ENCODE measurements at regions of chr2 and their contacts with region 1.

Region 1: GRCh38 chr2:234500394-234501006 is 3.6 kb upstream of the ARL4C start:
- DNase-seq: peak; percentile 59 to 75
- ATAC-seq: peak; percentile 73

Region 2: DNA sequence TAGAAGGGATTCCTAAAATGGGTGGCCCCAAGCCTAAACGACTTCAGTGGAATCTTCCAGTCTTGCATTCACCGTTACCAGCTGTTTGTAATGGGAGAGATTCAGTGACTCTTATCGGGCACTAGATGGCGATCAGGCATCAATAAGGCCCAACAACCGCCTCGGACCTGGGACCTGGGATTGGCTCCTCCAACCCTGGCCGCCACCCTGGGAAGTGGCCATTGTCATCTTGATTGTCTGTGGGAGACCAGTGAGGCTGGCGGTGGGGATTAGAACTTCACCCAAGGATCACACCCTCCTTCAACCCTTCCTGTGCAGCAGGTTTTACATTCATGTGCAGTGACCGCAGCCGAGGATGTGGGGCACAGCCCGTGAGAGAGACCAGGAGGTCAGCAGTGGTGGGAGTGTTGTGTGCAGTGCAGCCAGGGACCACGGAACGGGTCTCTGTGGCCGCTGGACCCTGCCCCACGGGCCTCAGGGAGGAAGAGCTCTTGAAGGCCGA is 364.7 kb before region 1 on chr2:
- intact Hi-C with region 1: loop called (anchors 2 to 10 kb)
- DNase-seq: peak; percentile 33 to 63
- ATAC-seq: peak; percentile 97

Region 3: DNA sequence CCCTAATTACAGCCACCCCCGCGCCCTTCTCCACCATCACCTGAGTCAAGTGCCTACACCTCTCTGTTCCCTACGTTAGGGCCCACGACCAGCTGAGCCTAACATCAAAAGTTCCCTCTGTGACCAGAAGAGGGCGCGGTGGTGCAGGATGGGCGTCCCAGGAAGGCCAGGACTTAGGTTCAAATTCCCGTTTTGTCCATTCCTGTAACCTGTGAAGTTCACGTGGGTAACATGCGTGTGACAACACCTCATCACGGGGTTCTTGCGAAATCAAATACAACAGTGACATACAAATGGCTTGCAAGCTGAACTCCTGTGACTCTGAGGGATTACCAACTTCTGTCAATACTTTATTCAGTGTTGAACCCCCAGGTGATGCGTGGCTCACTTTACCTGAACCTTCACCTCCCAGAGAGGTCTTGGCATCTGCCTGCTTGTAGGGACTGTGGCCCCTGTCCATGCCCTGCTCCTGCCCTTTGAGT is 211.5 kb before region 1 on chr2:
- intact Hi-C with region 1: loop called in 1 of 2 experiments (anchors 5 kb)
- DNase-seq: peak; percentile 35 to 75
- ATAC-seq: peak; percentile 23